ENCODE measurements at regions of chr17 and their contacts with region 1.

Region 1: GRCh38 chr17:46832945-46833839 is 14.7 kb upstream of the WNT3 start:
- DNase-seq: no peak
- H3K4me3 ChIP-seq: no peak overlapping the region
- H3K27ac ChIP-seq: no peak overlapping the region
- H3K4me1 ChIP-seq: no peaks in the 10 kb centered on the region
- H3K27me3 ChIP-seq: peaks cover 3 to 4% of the 10 kb centered on the region in 2 experiments
- CTCF ChIP-seq: no peak
- POLR2A ChIP-seq: no peak

Region 2: GRCh38 chr17:46782250-46782953 is 50.8 kb before region 1 on chr17:
- CTCF ChIA-PET with region 1: interaction called, 6 read pairs
- POLR2A ChIA-PET with region 1: no interaction called
- dilution Hi-C with region 1: no loop called
- intact Hi-C with region 1: loop called (anchors 10 kb)
- DNase-seq: peak; percentile 41
- H3K4me3 ChIP-seq: no peak overlapping the region
- H3K27ac ChIP-seq: no peak overlapping the region
- H3K4me1 ChIP-seq: no peaks in the 10 kb centered on the region
- H3K27me3 ChIP-seq: peaks cover 0 to 2% of the 10 kb centered on the region in 2 experiments
- CTCF ChIP-seq: peak; percentile 61 to 87
- POLR2A ChIP-seq: no peak

Region 3: DNA sequence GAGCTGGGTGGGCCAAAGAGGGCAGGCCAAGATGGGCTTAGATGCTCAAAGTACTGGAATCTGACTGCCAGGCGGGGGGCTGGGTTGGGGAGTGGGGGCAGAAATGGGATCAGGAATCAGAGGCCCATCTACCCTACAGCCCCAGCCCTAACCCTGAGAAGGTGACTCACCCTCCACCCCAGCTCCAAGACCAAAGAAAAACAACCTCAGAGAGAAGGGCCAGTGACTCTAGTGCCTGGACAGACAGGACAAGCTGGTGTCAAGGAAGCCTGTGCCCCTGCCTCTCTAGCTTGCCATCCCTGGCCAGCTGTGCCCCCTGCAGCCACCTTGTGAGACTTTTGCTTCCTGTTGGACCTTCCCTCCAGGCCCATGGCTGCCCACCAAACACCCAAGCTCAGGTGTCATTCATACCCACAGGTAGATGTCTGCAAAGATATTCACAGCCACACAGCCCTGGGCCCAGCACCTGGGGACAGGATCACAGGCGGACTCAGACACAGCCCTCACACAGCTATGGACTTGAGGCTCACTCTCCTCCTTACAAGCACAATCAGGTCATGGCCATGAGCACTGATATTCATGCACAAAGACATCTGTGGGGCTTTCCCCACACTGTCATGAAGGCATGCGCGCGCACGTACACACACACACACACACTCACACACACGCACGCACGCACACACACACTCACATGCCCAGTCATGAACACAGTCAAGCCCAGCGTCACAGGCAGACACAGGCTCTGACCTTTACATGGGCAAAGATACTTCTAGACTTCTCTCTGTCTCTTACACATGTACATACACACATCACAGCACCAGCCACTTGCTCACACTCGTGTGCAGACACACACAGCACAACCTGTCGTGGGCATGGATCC is 17.5 kb before region 1 on chr17:
- CTCF ChIA-PET with region 1: interaction called, 34 read pairs
- POLR2A ChIA-PET with region 1: no interaction called
- dilution Hi-C with region 1: no loop called
- intact Hi-C with region 1: no loop called
- DNase-seq: no peak
- H3K4me3 ChIP-seq: no peak overlapping the region
- H3K27ac ChIP-seq: no peak overlapping the region
- H3K4me1 ChIP-seq: no peaks in the 10 kb centered on the region
- H3K27me3 ChIP-seq: peaks cover 46 to 55% of the 10 kb centered on the region in 2 experiments
- CTCF ChIP-seq: no peak
- POLR2A ChIP-seq: no peak

Region 4: DNA sequence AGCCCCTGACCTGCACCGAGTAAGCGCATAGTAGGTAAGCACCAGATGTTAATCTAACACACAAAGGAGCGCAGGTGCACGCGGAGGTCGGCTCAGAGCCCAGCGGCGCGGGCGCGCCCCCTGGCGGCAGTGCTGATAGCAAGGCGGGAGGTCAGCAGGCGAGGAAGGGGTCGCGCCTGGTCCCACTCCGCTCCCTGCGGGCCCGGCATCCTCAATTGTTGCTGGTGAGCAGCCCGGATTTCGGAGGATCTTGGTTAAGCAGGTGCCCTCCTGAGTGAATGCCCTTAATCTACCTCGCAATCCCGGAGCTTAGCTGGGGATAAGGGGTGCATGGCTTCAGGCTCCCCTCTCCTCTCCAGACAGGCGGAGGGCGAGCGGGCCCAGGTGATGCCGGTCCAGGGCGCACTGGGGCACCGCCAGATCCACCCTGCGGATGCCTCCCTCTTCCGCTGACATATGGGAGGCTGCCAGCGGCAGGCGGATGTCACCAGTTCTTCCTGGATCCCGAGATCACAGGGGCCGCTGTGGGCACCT is 10.7 kb before region 1 on chr17:
- CTCF ChIA-PET with region 1: interaction called, 34 read pairs
- POLR2A ChIA-PET with region 1: no interaction called
- dilution Hi-C with region 1: no loop called
- intact Hi-C with region 1: no loop called
- DNase-seq: no peak
- H3K4me3 ChIP-seq: no peak overlapping the region
- H3K27ac ChIP-seq: no peak overlapping the region
- H3K4me1 ChIP-seq: no peaks in the 10 kb centered on the region
- H3K27me3 ChIP-seq: peaks cover 46 to 54% of the 10 kb centered on the region in 2 experiments
- CTCF ChIP-seq: peak; percentile 65 to 72
- POLR2A ChIP-seq: no peak

Region 5: DNA sequence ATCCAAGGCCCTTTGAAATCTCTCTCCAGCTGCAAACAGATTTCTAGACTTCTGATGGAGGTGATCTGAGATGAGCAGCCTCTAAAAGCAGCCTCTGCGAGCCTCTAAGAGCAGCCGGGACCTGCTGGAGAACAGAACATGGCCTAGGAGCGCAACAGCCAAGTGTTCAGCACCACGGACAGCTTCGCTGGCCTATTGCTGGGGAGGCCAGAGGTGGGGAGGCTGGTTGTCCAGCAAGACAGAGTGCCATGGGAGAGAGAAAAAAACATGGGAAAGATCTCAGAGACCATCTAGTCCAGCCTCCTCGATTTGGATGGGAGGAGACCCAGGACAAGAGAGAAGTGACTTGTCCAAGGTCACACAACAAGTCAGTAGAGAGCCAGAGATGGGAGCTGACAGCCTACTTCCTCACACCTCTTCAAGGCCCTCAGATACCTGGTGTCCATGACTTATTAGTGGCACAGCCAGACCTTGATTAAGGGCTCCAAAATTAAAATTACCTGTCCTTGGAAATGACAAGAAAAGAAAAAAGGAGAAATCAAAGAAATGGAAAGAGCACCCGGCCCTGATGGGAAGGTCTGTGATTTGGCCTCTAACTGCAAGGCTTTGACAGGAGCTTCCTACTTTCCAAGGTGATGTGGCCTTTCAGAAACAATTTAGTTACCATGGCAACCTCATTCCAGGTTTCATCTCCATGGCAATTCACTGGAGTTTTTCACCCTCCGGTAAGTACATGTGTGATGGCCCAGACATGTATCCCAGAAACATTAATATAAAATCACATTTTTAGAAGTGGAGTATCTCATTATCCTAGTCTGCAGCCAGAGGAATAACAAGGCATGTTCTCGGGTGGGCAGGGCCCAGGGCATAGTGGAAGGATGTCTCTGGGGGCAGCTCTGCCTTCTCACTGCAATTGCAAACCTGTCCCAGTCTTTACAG is 131.4 kb after region 1 on chr17:
- CTCF ChIA-PET with region 1: no interaction called
- POLR2A ChIA-PET with region 1: no interaction called
- dilution Hi-C with region 1: no loop called
- intact Hi-C with region 1: no loop called
- DNase-seq: no peak
- H3K4me3 ChIP-seq: no peak overlapping the region
- H3K27ac ChIP-seq: no peak overlapping the region
- H3K4me1 ChIP-seq: no peaks in the 10 kb centered on the region
- H3K27me3 ChIP-seq: peaks cover 2 to 7% of the 10 kb centered on the region in 2 experiments
- CTCF ChIP-seq: no peak
- POLR2A ChIP-seq: no peak

Region 6: GRCh38 chr17:46995841-46996571 is 162.8 kb after region 1 on chr17:
- CTCF ChIA-PET with region 1: no interaction called
- POLR2A ChIA-PET with region 1: no interaction called
- dilution Hi-C with region 1: no loop called
- intact Hi-C with region 1: no loop called
- DNase-seq: peak; percentile 65
- H3K4me3 ChIP-seq: no peak overlapping the region
- H3K27ac ChIP-seq: peak overlapping the region; percentile 9
- H3K4me1 ChIP-seq: peaks cover 8% of the 10 kb centered on the region
- H3K27me3 ChIP-seq: no peaks in the 10 kb centered on the region
- CTCF ChIP-seq: no peak
- POLR2A ChIP-seq: no peak

Measured in endothelial cell of umbilical vein (primary cell).